Activated T-helper 2 cell treated with anti-CD3 and anti-CD28 coated beads, Interferon-gamma antibody, Interleukin-2, Interleukin-4, amounts not matched to agents 10 μg/mL and 5 μg/mL and 100 μg/mL, durations not matched to agents 14 hours and 24 hours and 36 hours (primary cell): ENCODE measurements at regions of chr13 and their contacts with region 1.

Region 1: GRCh38 chr13:80342471-80343380 is 1.8 kb upstream of the SPRY2 start:
- DNase-seq: peak; percentile 58
- H3K4me3 Mint-ChIP-seq: peak overlapping the region; percentile 67
- H3K27ac Mint-ChIP-seq: no peak overlapping the region
- H3K4me1 Mint-ChIP-seq: peaks cover 8% of the 10 kb centered on the region
- H3K27me3 Mint-ChIP-seq: peaks cover 40% of the 10 kb centered on the region

Region 2: DNA sequence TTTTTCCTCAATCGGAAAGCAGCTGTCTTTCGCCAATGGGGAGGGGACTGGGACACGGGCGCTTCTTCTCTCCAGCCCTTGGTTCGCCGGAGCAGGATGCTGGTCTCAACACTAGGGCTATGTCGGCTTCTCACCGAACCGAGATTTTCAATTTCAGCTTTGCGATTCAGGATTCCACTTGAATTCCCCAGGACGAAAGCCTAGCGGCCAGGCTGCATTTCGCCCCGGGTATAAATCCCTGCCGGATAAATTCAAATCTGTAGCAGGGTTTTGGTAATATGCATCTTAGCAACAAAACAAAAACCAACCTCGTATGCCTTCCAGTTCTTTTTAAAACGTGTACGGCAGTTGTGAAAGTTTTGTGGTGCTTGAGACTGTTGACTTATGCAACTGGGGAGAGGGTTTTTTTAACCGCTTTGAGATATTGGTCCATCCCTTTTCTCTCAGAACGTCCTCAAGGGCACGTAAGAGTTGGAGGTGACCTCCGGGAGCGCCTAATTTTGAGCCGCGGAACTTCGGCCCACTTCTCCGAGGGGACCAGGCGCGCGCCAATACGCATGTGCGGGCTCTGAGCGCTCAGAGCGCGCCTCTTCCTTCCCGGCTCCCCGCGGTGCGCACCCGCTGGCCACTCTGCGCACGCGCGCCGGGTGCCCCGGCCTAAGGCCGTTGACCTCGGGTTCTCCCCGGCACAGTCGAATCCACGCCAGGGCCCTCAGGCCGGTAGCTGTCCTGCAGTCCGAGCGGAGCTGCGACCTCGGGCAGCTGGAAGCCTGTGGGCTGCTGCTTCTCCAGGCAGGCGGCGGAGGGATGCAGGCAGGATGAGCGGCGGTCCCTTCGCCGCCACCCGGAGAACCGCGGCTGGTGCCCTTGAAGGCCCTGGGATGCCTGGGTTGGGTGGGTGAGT is 1747.0 kb before region 1 on chr13:
- intact Hi-C with region 1: loop called (anchors 5 kb)
- DNase-seq: no peak
- H3K4me3 Mint-ChIP-seq: no peak overlapping the region
- H3K27ac Mint-ChIP-seq: no peak overlapping the region
- H3K4me1 Mint-ChIP-seq: peaks cover 14% of the 10 kb centered on the region
- H3K27me3 Mint-ChIP-seq: peaks cover 81% of the 10 kb centered on the region

Region 3: GRCh38 chr13:78609464-78610205 is 1733.1 kb before region 1 on chr13:
- intact Hi-C with region 1: loop called (anchors 5 kb)
- DNase-seq: no peak
- H3K4me3 Mint-ChIP-seq: peak overlapping the region; percentile 58
- H3K27ac Mint-ChIP-seq: no peak overlapping the region
- H3K4me1 Mint-ChIP-seq: peaks cover 16% of the 10 kb centered on the region
- H3K27me3 Mint-ChIP-seq: peaks cover 66% of the 10 kb centered on the region

Region 4: GRCh38 chr13:79533781-79534400 is 808.8 kb before region 1 on chr13:
- intact Hi-C with region 1: no loop called
- DNase-seq: no peak
- H3K4me3 Mint-ChIP-seq: peak overlapping the region; percentile 22
- H3K27ac Mint-ChIP-seq: peak overlapping the region; percentile 67
- H3K4me1 Mint-ChIP-seq: peaks cover 64% of the 10 kb centered on the region
- H3K27me3 Mint-ChIP-seq: no peaks in the 10 kb centered on the region

Region 5: DNA sequence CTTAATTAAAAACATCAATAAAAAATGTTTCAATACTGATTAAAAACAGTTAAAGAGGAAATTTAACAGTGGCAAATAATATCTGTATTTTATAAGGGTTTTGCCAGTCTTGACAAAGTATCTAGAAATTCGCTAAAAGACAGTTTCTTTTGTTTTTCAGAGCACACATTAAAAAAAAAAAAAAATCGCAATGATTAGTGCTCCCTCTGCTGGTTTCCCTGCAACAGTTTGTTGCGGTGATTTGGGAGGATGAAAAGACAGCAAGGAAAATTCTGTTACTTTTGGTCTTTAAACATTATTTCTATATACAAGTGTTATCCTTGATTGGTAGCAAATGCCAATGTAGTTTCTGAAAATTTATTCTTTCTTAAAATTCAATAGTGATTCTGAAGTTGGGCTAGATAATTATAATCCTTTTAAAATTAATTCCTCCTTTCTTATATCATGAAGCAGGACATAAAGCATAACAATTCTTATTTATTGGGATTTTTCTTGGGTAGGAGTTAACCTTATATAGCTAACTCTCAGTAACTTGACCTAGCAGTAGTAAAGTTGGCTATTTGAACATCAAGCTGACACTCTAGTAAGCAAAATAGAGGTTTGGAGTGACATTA is 21.3 kb after region 1 on chr13:
- intact Hi-C with region 1: loop called (anchors 2 kb)
- DNase-seq: no peak
- H3K4me3 Mint-ChIP-seq: no peak overlapping the region
- H3K27ac Mint-ChIP-seq: no peak overlapping the region
- H3K4me1 Mint-ChIP-seq: peaks cover 2% of the 10 kb centered on the region
- H3K27me3 Mint-ChIP-seq: no peaks in the 10 kb centered on the region

Region 6: GRCh38 chr13:81017513-81018152 is 674.9 kb after region 1 on chr13:
- intact Hi-C with region 1: loop called (anchors 10 kb)
- DNase-seq: no peak
- H3K4me3 Mint-ChIP-seq: no peak overlapping the region
- H3K27ac Mint-ChIP-seq: no peak overlapping the region
- H3K4me1 Mint-ChIP-seq: no peaks in the 10 kb centered on the region
- H3K27me3 Mint-ChIP-seq: no peaks in the 10 kb centered on the region